ENCODE measurements at regions of chr2 and their contacts with region 1.

Region 1: GRCh38 chr2:130372055-130372832 is 16.4 kb downstream of the PTPN18 start:
- DNase-seq: peak; percentile 82
- H3K4me3 Mint-ChIP-seq: peak overlapping the region; percentile 87
- H3K27ac Mint-ChIP-seq: peak overlapping the region; percentile 98
- H3K4me1 Mint-ChIP-seq: peaks cover 56% of the 10 kb centered on the region
- H3K27me3 Mint-ChIP-seq: no peaks in the 10 kb centered on the region

Region 2: GRCh38 chr2:130355578-130356431 is 16.4 kb before region 1 on chr2 and contains the start of gene PTPN18:
- CTCF ChIA-PET with region 1: interaction called, 7 read pairs
- POLR2A ChIA-PET with region 1: interaction called, 6 read pairs
- intact Hi-C with region 1: loop called (anchors 1 kb)
- DNase-seq: peak; percentile 73
- H3K4me3 Mint-ChIP-seq: peak within 1 kb of the TSS; percentile 75
- H3K27ac Mint-ChIP-seq: no peak within 1 kb of the TSS
- H3K4me1 Mint-ChIP-seq: peaks cover 12% of the 10 kb centered on the region
- H3K27me3 Mint-ChIP-seq: no peaks in the 10 kb centered on the region
- total RNA-seq, gene PTPN18: 42.1 to 44.9 TPM

Region 3: GRCh38 chr2:130391058-130391871 is 19.0 kb after region 1 on chr2:
- CTCF ChIA-PET with region 1: interaction called, 11 read pairs
- POLR2A ChIA-PET with region 1: interaction called, 5 read pairs
- intact Hi-C with region 1: loop called (anchors 1 kb)
- DNase-seq: peak; percentile 84
- H3K4me3 Mint-ChIP-seq: peak overlapping the region; percentile 75
- H3K27ac Mint-ChIP-seq: no peak overlapping the region
- H3K4me1 Mint-ChIP-seq: peaks cover 9% of the 10 kb centered on the region
- H3K27me3 Mint-ChIP-seq: peaks cover 4% of the 10 kb centered on the region

Region 4: DNA sequence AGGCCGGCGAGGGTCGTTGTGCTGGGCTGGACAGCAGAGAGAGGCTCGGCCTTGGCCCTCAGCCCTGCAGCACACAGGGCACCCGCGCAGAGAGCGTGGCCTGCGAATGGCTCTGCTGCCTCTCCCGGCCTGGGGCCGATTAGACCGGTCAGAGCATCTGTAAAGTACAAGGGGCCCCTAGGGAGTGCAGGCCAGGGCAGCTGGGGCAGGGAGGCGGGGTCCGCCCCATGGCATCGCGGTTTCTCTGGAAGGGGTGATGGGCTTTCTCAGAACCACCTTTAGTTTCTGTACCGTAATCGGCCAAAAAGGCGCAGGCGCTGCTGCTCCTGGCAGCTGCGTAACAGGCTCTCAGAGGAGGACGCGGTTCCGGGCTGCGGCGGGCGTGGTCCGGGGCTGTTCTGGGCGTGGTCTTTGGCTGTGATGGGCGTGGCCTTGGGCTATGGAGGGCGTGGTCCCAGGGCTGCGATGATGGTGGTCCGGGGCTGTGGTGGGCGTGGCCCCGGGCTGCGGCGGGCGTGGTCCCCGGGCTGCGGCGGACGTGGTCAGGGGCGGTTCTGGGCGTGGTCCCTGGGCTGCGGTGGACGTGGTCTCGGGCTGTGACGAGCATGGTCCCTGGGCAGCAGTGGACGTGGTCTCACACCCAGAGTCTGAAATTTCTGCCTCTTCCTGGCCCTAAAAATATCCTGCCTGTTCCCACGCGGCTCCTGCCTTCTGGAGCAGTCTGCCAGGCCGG is 355.2 kb after region 1 on chr2:
- CTCF ChIA-PET with region 1: no interaction called
- POLR2A ChIA-PET with region 1: no interaction called
- intact Hi-C with region 1: loop called (anchors 5 kb)
- DNase-seq: peak; percentile 95
- H3K4me3 Mint-ChIP-seq: peak overlapping the region; percentile 70
- H3K27ac Mint-ChIP-seq: peak overlapping the region; percentile 55
- H3K4me1 Mint-ChIP-seq: peaks cover 9% of the 10 kb centered on the region
- H3K27me3 Mint-ChIP-seq: peaks cover 1% of the 10 kb centered on the region

Region 5: GRCh38 chr2:131093006-131093695 is 720.9 kb after region 1 on chr2 and contains the start of gene FAM168B:
- CTCF ChIA-PET with region 1: no interaction called
- POLR2A ChIA-PET with region 1: no interaction called
- intact Hi-C with region 1: loop called (anchors 5 kb)
- DNase-seq: peak; percentile 92
- H3K4me3 Mint-ChIP-seq: peak within 1 kb of the TSS; percentile 96
- H3K27ac Mint-ChIP-seq: peak within 1 kb of the TSS; percentile 96
- H3K4me1 Mint-ChIP-seq: peaks cover 15% of the 10 kb centered on the region
- H3K27me3 Mint-ChIP-seq: no peaks in the 10 kb centered on the region
- total RNA-seq, gene FAM168B: 50.5 to 57.1 TPM

Measured in activated CD4-positive, alpha-beta memory T cell treated with anti-CD3 and anti-CD28 coated beads for 36 hours (primary cell).